ENCODE measurements at regions of chr4 and their contacts with region 1.

Region 1: GRCh38 chr4:47278631-47279030 is 184.9 kb downstream of the COMMD8 start:
- DNase-seq: no peak
- ATAC-seq: no peak
- H3K4me3 ChIP-seq: no peak overlapping the region
- H3K4me3 Mint-ChIP-seq: no peak overlapping the region
- H3K27ac ChIP-seq: no peak overlapping the region
- H3K27ac Mint-ChIP-seq: no peak overlapping the region
- H3K4me1 ChIP-seq: no peaks in the 10 kb centered on the region
- H3K4me1 Mint-ChIP-seq: no peaks in the 10 kb centered on the region
- H3K27me3 ChIP-seq: no peaks in the 10 kb centered on the region
- H3K27me3 Mint-ChIP-seq: peaks cover 7% of the 10 kb centered on the region
- CTCF ChIP-seq: no peak

Region 2: GRCh38 chr4:47167081-47168035 is 111.3 kb before region 1 on chr4:
- CTCF ChIA-PET with region 1: no interaction called
- POLR2A ChIA-PET with region 1: no interaction called
- intact Hi-C with region 1: no loop called
- DNase-seq: no peak
- ATAC-seq: no peak
- H3K4me3 ChIP-seq: no peak overlapping the region
- H3K4me3 Mint-ChIP-seq: no peak overlapping the region
- H3K27ac ChIP-seq: no peak overlapping the region
- H3K27ac Mint-ChIP-seq: no peak overlapping the region
- H3K4me1 ChIP-seq: no peaks in the 10 kb centered on the region
- H3K4me1 Mint-ChIP-seq: no peaks in the 10 kb centered on the region
- H3K27me3 ChIP-seq: no peaks in the 10 kb centered on the region
- H3K27me3 Mint-ChIP-seq: no peaks in the 10 kb centered on the region
- CTCF ChIP-seq: no peak

Region 3: DNA sequence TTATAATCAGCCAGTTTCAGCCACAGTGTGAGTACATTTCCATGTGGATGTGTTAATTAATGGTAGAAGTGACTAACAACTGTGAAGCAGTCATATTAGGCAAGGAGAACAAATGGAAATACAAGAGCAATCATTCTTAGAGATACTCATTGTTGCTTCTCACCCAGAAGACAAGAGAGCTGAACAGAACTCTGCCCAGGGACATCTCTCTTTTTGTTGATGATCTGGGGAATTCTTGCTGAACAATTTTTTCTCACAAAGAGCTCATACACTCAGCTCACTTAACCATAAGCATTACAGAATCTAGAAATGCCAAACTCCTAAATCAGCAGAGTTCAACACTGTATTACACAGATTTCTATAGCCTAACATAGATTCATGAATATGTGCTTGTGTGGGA is 34.8 kb after region 1 on chr4:
- CTCF ChIA-PET with region 1: no interaction called
- POLR2A ChIA-PET with region 1: no interaction called
- intact Hi-C with region 1: loop called in 1 of 2 experiments (anchors 1 kb)
- DNase-seq: no peak
- ATAC-seq: no peak
- H3K4me3 ChIP-seq: no peak overlapping the region
- H3K4me3 Mint-ChIP-seq: no peak overlapping the region
- H3K27ac ChIP-seq: no peak overlapping the region
- H3K27ac Mint-ChIP-seq: no peak overlapping the region
- H3K4me1 ChIP-seq: no peaks in the 10 kb centered on the region
- H3K4me1 Mint-ChIP-seq: no peaks in the 10 kb centered on the region
- H3K27me3 ChIP-seq: no peaks in the 10 kb centered on the region
- H3K27me3 Mint-ChIP-seq: peaks cover 7% of the 10 kb centered on the region
- CTCF ChIP-seq: no peak